Activated CD4-positive, alpha-beta memory T cell treated with anti-CD3 and anti-CD28 coated beads for 36 hours (primary cell): ENCODE measurements at regions of chr4 and their contacts with region 1.

Region 1: DNA sequence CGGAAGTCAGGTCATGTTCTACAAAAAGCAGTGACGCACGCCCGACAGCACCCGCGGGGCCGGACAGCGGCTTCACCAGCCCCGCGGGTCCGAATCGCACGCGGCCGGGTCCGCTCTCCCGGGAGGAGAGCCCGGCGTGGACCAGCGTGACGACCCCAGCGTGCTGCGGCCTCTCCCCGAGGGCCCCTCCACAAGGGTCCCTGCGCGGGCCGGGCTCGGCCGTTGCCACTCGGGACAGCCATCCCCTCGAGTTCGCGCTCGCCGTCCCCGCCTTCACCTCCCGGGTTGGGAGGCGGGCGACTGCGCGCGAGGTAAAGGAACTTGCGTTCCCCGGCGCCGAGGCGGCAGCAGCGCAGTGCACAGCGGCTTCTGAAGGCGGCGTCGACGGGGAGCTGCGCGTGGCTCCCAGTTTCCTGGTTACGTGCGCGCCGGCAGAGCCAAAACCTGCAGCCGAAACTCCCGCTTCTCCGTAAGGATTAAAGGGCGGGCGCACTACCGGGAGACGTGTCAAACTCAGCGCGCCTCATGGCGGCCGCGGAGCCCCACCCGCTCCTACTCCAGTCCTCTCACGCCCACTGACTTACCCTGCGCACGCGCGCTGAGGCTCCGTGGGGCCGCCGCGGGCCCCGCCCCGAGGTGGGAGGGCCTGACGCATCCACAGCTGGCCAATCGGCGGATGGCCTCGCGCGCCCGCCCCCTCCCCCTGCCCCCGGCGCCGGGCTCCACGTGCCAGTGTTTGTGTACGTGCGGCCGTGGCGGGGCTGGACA is 416 bp upstream of the LRP2BP start:
- DNase-seq: peak; percentile 98
- H3K4me3 Mint-ChIP-seq: peak overlapping the region; percentile 95
- H3K27ac Mint-ChIP-seq: peak overlapping the region; percentile 97
- H3K4me1 Mint-ChIP-seq: peaks cover 37% of the 10 kb centered on the region
- H3K27me3 Mint-ChIP-seq: no peaks in the 10 kb centered on the region

Region 2: DNA sequence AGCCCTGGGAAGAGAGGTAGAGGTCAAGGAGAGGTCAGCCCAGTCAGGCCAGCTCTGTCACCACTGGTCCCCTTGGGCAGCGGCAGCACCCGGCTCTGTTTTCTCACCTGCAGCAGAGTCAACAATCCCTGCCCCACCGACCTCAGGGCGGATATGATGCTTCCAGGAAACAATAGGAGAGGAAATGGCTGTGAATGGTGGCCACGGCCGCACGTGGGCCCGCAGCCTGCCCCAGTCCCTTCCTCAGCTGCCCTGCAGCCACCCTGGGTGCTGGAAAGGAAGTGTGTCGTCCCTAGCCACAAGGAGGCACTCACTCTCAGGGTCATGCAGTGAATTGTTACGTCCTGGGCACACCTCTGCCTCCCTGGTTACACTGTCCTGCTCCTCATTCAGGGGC is 1086.0 kb before region 1 on chr4:
- CTCF ChIA-PET with region 1: no interaction called
- POLR2A ChIA-PET with region 1: no interaction called
- intact Hi-C with region 1: no loop called
- DNase-seq: peak; percentile 81
- H3K4me3 Mint-ChIP-seq: peak overlapping the region; percentile 4
- H3K27ac Mint-ChIP-seq: peak overlapping the region; percentile 72
- H3K4me1 Mint-ChIP-seq: peaks cover 52% of the 10 kb centered on the region
- H3K27me3 Mint-ChIP-seq: no peaks in the 10 kb centered on the region

Region 3: DNA sequence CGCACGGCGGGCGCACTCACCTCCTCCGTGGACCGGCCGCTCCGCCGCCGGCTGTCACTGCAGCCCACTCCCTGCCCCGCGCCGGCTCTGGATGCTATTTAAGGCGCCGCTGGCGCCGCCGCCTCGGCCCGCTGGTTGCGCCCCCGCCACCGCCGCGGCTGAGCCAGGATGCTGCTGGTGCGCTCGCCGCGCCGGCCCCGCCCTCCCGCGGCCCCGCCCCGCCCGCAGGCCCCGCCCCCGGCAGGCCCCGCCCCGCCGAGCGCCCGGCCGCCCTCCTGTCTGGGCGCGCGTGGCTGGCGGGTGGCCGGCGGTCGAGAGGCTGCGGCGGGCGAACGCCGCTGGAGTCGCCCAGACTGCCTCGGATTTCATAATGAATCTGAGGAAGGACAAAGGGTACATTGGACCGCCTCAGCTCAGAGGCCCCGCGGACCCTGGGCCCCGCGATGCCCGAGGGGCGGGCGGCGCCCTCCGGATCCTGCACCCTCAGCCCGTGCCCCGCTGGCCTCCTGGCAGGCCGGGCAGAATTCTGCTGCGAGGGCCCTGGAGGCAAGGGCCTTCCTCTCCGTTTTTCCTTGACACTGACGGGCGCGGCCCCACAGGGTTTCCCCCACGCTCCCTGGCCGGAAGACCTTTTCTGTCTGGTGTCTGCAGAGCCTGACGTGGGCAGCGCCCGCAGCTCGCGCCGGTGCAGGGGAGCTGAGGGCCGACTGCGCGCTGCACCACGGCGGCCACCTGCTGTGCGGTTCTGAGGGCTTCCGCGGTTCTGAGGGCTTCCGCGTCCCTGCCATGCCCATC is 570.0 kb before region 1 on chr4 and contains the start of gene ACSL1:
- CTCF ChIA-PET with region 1: no interaction called
- POLR2A ChIA-PET with region 1: no interaction called
- intact Hi-C with region 1: loop called (anchors 10 kb)
- DNase-seq: peak; percentile 84
- H3K4me3 Mint-ChIP-seq: peak within 1 kb of the TSS; percentile 87
- H3K27ac Mint-ChIP-seq: peak within 1 kb of the TSS; percentile 75
- H3K4me1 Mint-ChIP-seq: peaks cover 37% of the 10 kb centered on the region
- H3K27me3 Mint-ChIP-seq: no peaks in the 10 kb centered on the region
- total RNA-seq, gene ACSL1: 22.0 to 22.2 TPM

Region 4: GRCh38 chr4:185203486-185204237 is 192.5 kb before region 1 on chr4 and contains the start of gene CFAP97:
- CTCF ChIA-PET with region 1: interaction called, 4 read pairs
- POLR2A ChIA-PET with region 1: interaction called, 8 read pairs
- intact Hi-C with region 1: loop called (anchors 1 kb)
- DNase-seq: peak; percentile 81
- H3K4me3 Mint-ChIP-seq: peak within 1 kb of the TSS; percentile 94
- H3K27ac Mint-ChIP-seq: peak within 1 kb of the TSS; percentile 97
- H3K4me1 Mint-ChIP-seq: peaks cover 48% of the 10 kb centered on the region
- H3K27me3 Mint-ChIP-seq: no peaks in the 10 kb centered on the region
- total RNA-seq, gene CFAP97: 47.5 to 48.6 TPM

Region 5: DNA sequence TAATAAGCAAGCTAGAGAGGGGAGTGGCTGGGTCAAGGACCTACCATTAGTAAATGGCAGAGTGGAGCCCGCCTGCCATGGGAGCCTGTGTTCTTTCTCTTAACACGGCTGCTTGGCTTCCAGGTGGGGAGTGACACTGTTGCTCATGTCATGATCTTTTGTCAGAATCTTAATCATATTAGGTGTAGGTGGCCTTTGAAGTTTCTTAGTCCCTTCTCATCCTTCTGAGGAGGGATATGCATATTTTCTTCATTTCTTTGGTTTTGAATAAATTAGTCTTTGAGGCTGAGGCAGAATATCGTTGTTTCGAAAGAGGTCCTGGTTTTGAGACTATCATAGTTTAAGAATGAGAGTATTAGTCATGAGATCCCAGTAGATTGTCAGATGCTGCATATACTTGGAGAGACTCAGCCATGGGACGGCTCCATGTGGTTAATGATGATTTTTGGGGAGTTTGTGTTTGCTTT is 157.9 kb before region 1 on chr4:
- CTCF ChIA-PET with region 1: no interaction called
- POLR2A ChIA-PET with region 1: no interaction called
- intact Hi-C with region 1: loop called (anchors 1 kb)
- DNase-seq: peak; percentile 64
- H3K4me3 Mint-ChIP-seq: peak overlapping the region; percentile 49
- H3K27ac Mint-ChIP-seq: peak overlapping the region; percentile 68
- H3K4me1 Mint-ChIP-seq: peaks cover 33% of the 10 kb centered on the region
- H3K27me3 Mint-ChIP-seq: no peaks in the 10 kb centered on the region

Region 6: DNA sequence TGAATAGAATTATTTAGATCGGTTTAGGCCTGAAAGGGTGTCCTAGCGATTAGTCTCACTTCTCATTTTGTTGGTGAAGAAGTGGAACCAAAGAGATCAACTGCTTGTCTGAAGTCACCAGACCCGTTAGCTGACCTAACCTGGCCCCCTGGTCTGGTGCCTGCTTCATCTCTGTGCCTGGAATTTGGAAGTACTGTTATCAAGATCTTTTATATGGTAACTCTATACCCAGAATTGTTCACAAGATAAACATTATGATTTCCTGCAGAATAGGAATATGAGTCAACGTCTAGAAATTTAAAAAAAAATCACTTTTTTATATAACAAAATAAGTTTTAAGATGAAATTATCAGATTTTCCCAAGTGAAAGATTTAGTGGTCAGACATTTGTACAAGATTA is 37.6 kb before region 1 on chr4:
- CTCF ChIA-PET with region 1: no interaction called
- POLR2A ChIA-PET with region 1: no interaction called
- intact Hi-C with region 1: loop called (anchors 5 kb)
- DNase-seq: no peak
- H3K4me3 Mint-ChIP-seq: no peak overlapping the region
- H3K27ac Mint-ChIP-seq: no peak overlapping the region
- H3K4me1 Mint-ChIP-seq: peaks cover 11% of the 10 kb centered on the region
- H3K27me3 Mint-ChIP-seq: no peaks in the 10 kb centered on the region

Region 7: GRCh38 chr4:185471235-185472102 is 75.3 kb after region 1 on chr4 and contains the start of gene CCDC110:
- CTCF ChIA-PET with region 1: no interaction called
- POLR2A ChIA-PET with region 1: interaction called, 3 read pairs
- intact Hi-C with region 1: loop called (anchors 1 kb)
- DNase-seq: peak; percentile 94
- H3K4me3 Mint-ChIP-seq: peak within 1 kb of the TSS; percentile 77
- H3K27ac Mint-ChIP-seq: no peak within 1 kb of the TSS
- H3K4me1 Mint-ChIP-seq: peaks cover 4% of the 10 kb centered on the region
- H3K27me3 Mint-ChIP-seq: peaks cover 9% of the 10 kb centered on the region
- total RNA-seq, gene CCDC110: 0.10 to 0.26 TPM